Mammary epithelial cell (primary cell): ENCODE measurements at regions of chr17 and their contacts with region 1.

Region 1: GRCh38 chr17:404703-405102 is 52.1 kb upstream of the RPH3AL start:
- DNase-seq: no peak
- H3K4me3 ChIP-seq: no peak overlapping the region
- H3K27ac ChIP-seq: no peak overlapping the region
- H3K4me1 ChIP-seq: no peaks in the 10 kb centered on the region
- H3K27me3 ChIP-seq: no peaks in the 10 kb centered on the region
- CTCF ChIP-seq: no peak

Region 2: GRCh38 chr17:301681-302298 is 102.9 kb before region 1 on chr17:
- CTCF ChIA-PET with region 1: no interaction called
- dilution Hi-C with region 1: no loop called
- in situ Hi-C with region 1: no loop called
- intact Hi-C with region 1: no loop called
- DNase-seq: no peak
- H3K4me3 ChIP-seq: no peak overlapping the region
- H3K27ac ChIP-seq: no peak overlapping the region
- H3K4me1 ChIP-seq: peaks cover 3% of the 10 kb centered on the region
- H3K27me3 ChIP-seq: no peaks in the 10 kb centered on the region
- CTCF ChIP-seq: no peak

Region 3: GRCh38 chr17:393806-394717 is 10.6 kb before region 1 on chr17:
- CTCF ChIA-PET with region 1: interaction called, 16 read pairs
- dilution Hi-C with region 1: no loop called
- in situ Hi-C with region 1: no loop called
- intact Hi-C with region 1: no loop called
- DNase-seq: no peak
- H3K4me3 ChIP-seq: no peak overlapping the region
- H3K27ac ChIP-seq: no peak overlapping the region
- H3K4me1 ChIP-seq: peaks cover 12% of the 10 kb centered on the region
- H3K27me3 ChIP-seq: no peaks in the 10 kb centered on the region
- CTCF ChIP-seq: no peak